ENCODE measurements at regions of chr1 and their contacts with region 1.

Region 1: DNA sequence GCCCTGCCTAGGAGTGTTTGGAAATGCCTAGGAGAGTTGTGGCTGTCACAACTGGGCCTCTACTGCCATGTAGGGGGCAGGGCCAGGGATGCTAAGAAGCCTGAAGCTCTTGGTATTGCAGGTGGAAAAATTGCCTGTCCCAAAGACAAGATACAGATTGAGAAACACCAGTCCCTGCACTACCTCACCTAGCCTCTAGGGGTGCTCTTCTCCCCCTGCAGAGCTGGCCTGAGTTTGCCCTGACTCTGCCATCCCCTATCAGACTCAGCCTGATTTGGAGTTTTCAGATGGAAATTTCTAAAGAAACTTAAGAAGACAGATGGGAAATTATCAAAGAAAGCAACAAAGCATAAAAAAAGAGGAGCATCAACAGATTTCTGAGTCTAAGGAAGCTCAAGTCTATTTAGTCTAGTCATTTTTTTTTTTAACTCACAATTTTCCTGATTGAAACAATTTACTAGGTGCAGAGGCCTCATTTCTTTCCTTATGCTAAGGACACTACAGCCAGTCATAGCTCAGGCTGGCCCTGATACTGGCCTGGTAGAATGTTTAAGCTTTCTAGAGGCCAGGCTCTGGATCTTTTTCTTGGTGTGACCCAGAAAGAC is 61.4 kb upstream of the LRRN2 start:
- DNase-seq: peak; percentile 25
- H3K4me3 ChIP-seq: no peak overlapping the region
- H3K27ac ChIP-seq: no peak overlapping the region
- H3K4me1 ChIP-seq: peaks cover 6% of the 10 kb centered on the region
- H3K27me3 ChIP-seq: no peaks in the 10 kb centered on the region
- CTCF ChIP-seq: peak; percentile 88 to 97

Region 2: DNA sequence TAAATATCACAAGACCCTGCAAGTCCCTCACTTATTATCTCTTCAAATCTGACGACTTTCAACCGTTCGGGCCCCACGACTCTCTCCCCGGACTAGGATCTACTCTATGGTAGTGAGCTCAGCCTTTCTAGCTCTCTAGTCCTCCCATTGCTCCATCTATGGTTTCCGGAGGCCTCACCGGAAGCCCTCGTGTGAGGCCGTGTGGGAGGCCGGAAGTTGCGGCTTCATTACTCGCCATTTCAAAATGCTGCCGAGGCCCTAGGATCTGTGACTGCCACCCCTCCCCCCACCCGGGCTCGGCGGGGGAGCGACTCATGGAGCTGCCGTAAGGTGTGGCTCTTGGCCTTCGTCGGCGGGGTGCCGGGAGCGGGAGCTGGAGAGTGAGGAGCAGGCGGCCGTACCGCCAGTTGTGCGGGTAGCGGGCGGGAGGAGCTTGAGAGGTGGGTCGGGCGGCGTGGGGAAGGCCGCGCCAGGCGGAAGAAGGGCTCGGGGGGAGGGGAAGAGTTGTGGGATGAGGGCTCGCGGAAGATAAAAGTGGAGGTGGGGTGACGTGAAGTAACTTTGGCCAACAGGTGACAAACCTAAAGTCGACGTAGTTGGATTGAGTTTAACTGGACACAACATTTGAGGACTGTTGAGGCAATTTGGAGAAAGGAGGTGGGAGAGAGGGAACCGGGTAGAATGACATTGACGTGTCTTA is 230.6 kb before region 1 on chr1 and contains the start of gene MDM4:
- CTCF ChIA-PET with region 1: no interaction called
- dilution Hi-C with region 1: no loop called
- in situ Hi-C with region 1: no loop called
- intact Hi-C with region 1: no loop called
- DNase-seq: peak; percentile 96
- H3K4me3 ChIP-seq: peak within 1 kb of the TSS; percentile 56 to 86 (median 64)
- H3K27ac ChIP-seq: peak within 1 kb of the TSS; percentile 69
- H3K4me1 ChIP-seq: peaks cover 10% of the 10 kb centered on the region
- H3K27me3 ChIP-seq: no peaks in the 10 kb centered on the region
- CTCF ChIP-seq: no peak
- total RNA-seq, gene MDM4: 21.7 to 37.1 TPM

Region 3: DNA sequence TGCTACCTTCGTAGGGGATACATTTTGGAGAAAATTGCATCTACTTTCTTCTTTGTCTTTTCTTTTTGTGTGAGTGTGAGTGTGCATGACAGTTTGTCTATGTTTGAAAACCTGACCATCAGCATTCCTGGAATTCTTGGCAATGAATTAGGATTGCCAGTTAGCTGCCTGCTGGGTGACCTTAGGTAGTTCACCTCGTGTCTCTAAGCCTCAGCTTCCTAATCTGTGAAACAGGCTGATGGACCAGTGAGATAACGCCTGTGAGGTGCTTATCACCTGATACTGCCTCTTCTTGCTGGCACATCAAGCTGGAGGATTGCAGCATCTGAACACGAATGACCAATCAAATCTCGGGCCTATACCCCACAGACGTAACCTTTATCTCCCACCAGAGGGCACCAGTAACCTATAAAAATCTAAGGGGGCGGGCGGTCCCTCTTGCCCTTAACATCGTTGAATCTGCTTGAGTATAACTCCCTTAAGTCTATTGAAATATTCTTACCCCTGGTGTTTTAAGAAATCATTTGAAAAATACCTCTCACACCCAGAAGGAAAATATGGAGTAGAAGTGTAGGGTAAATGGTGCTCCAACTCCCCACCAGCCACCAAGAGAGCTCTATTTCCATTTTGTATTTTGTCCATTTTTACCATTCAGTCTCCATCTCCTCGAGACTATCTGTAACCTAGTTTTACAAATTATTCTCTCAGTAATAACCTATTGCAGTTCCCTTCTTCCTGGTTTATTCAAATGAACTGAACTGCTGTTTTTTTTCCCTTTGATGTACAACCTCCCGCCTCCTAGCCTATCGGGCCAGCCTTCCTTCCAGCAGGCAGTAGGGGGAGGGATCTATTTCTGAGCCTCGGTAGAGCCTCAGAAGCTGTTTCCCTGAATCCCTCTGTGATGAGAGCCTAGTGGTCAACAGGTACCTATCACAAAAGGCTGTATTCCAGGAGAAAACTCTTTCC is 181.0 kb before region 1 on chr1:
- CTCF ChIA-PET with region 1: no interaction called
- dilution Hi-C with region 1: no loop called
- in situ Hi-C with region 1: no loop called
- intact Hi-C with region 1: loop called (anchors 5 kb)
- DNase-seq: peak; percentile 71
- H3K4me3 ChIP-seq: no peak overlapping the region
- H3K27ac ChIP-seq: no peak overlapping the region
- H3K4me1 ChIP-seq: peaks cover 8% of the 10 kb centered on the region
- H3K27me3 ChIP-seq: no peaks in the 10 kb centered on the region
- CTCF ChIP-seq: peak; percentile 52 to 73

Region 4: GRCh38 chr1:204736836-204737387 is 10.0 kb before region 1 on chr1:
- CTCF ChIA-PET with region 1: no interaction called
- dilution Hi-C with region 1: no loop called
- in situ Hi-C with region 1: no loop called
- intact Hi-C with region 1: loop called (anchors 1 kb)
- DNase-seq: no peak
- H3K4me3 ChIP-seq: no peak overlapping the region
- H3K27ac ChIP-seq: no peak overlapping the region
- H3K4me1 ChIP-seq: no peaks in the 10 kb centered on the region
- H3K27me3 ChIP-seq: no peaks in the 10 kb centered on the region
- CTCF ChIP-seq: no peak

Region 5: GRCh38 chr1:205013683-205014367 is 266.9 kb after region 1 on chr1:
- CTCF ChIA-PET with region 1: no interaction called
- dilution Hi-C with region 1: no loop called
- in situ Hi-C with region 1: no loop called
- intact Hi-C with region 1: no loop called
- DNase-seq: peak; percentile 23
- H3K4me3 ChIP-seq: no peak overlapping the region
- H3K27ac ChIP-seq: no peak overlapping the region
- H3K4me1 ChIP-seq: peaks cover 7% of the 10 kb centered on the region
- H3K27me3 ChIP-seq: no peaks in the 10 kb centered on the region
- CTCF ChIP-seq: no peak

Measured in mammary epithelial cell (primary cell).